Activated B cell treated with CpG ODN at 0.5 μM for 24 hours (primary cell): ENCODE measurements at regions of chr7 and their contacts with region 1.

Region 1: GRCh38 chr7:99374103-99375064 is at the start of gene ARPC1B:
- DNase-seq: peak; percentile 78
- ATAC-seq: peak; percentile 74
- H3K4me3 Mint-ChIP-seq: peak within 1 kb of the TSS; percentile 83
- H3K27ac Mint-ChIP-seq: peak within 1 kb of the TSS; percentile 79
- H3K4me1 Mint-ChIP-seq: peaks cover 33% of the 10 kb centered on the region
- H3K27me3 Mint-ChIP-seq: no peaks in the 10 kb centered on the region
- CTCF ChIP-seq: no peak
- total RNA-seq, gene ARPC1B: 300 and 312 TPM in 2 replicates

Region 2: GRCh38 chr7:99325545-99326407 is 48.6 kb before region 1 on chr7 and contains the start of gene ARPC1A:
- CTCF ChIA-PET with region 1: no interaction called
- POLR2A ChIA-PET with region 1: interaction called, 3 read pairs
- intact Hi-C with region 1: loop called (anchors 5 kb)
- DNase-seq: peak; percentile 93
- ATAC-seq: peak; percentile 93
- H3K4me3 Mint-ChIP-seq: peak within 1 kb of the TSS; percentile 93
- H3K27ac Mint-ChIP-seq: peak within 1 kb of the TSS; percentile 89
- H3K4me1 Mint-ChIP-seq: peaks cover 42% of the 10 kb centered on the region
- H3K27me3 Mint-ChIP-seq: no peaks in the 10 kb centered on the region
- CTCF ChIP-seq: no peak
- total RNA-seq, gene ARPC1A: 47.3 and 51.6 TPM in 2 replicates

Region 3: DNA sequence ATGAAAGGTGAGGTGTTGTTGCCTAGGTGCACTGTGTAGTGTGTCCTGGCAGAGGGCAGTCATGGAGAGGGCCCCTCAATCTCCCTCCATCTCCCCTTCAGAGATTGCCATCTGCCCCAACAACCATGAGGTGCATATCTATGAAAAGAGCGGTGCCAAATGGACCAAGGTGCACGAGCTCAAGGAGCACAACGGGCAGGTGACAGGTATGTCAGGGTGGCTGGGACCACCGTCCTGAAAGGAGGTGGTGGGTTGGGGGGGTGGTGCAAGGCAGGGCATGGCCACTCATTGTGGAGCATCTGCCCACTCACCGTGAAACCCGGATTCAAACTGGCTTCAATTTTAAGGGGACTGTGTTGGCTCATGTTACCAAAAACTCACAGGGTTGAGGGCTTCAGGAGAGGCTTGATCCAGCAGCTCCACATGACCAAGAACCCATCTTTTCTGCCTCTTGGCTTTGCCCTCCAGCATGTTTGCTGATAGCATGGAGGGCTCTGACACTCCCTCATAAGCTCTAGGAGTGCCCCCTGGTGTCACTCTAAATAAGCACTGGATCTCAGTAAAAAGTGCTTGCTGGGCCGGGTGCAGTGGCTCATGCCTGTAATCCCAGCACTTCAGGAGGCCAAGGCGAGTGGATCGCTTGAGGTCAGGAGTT is 12.3 kb after region 1 on chr7:
- CTCF ChIA-PET with region 1: interaction called, 6 read pairs
- POLR2A ChIA-PET with region 1: interaction called, 62 read pairs
- intact Hi-C with region 1: loop called (anchors 1 kb)
- DNase-seq: no peak
- ATAC-seq: peak; percentile 63
- H3K4me3 Mint-ChIP-seq: no peak overlapping the region
- H3K27ac Mint-ChIP-seq: peak overlapping the region; percentile 59
- H3K4me1 Mint-ChIP-seq: peaks cover 31% of the 10 kb centered on the region
- H3K27me3 Mint-ChIP-seq: no peaks in the 10 kb centered on the region
- CTCF ChIP-seq: no peak

Region 4: DNA sequence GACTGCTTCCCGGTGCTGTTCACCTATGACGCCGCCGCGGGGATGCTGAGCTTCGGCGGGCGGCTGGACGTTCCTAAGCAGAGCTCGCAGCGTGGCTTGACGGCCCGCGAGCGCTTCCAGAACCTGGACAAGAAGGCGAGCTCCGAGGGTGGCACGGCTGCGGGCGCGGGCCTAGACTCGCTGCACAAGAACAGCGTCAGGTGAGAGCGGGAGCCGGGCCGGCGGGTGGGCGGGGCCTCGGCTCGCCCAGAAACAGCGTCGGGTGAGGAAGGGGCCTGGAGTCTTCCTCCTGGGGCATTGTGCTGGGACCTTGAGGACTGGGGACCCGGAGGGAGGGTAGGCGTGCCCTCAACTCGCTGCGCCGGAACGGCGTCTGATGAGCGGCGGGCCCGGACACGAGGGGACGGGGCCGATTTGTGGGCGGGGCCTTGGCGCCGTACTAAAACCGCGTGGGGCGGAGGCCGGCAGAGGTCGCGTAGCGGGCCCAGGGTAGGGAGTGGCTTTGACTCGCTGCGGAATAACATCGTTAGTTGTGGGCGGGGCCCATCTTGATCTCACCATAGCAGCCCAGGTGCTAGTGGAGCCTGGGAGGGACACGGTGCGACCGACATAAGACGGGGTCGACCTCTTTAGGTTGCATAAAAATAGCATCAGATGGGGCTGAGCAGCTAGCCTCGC is 18.4 kb after region 1 on chr7:
- CTCF ChIA-PET with region 1: interaction called, 6 read pairs
- POLR2A ChIA-PET with region 1: interaction called, 62 read pairs
- intact Hi-C with region 1: loop called (anchors 1 kb)
- DNase-seq: peak; percentile 79
- ATAC-seq: peak; percentile 92
- H3K4me3 Mint-ChIP-seq: peak overlapping the region; percentile 84
- H3K27ac Mint-ChIP-seq: peak overlapping the region; percentile 78
- H3K4me1 Mint-ChIP-seq: peaks cover 28% of the 10 kb centered on the region
- H3K27me3 Mint-ChIP-seq: no peaks in the 10 kb centered on the region
- CTCF ChIP-seq: no peak

Region 5: GRCh38 chr7:99438573-99439480 is 64.4 kb after region 1 on chr7 and contains the starts of genes CPSF4 and PTCD1:
- CTCF ChIA-PET with region 1: no interaction called
- POLR2A ChIA-PET with region 1: interaction called, 8 read pairs
- intact Hi-C with region 1: loop called (anchors 2 kb)
- DNase-seq: peak; percentile 84
- ATAC-seq: peak; percentile 94
- H3K4me3 Mint-ChIP-seq: peak within 1 kb of the TSS; percentile 98
- H3K27ac Mint-ChIP-seq: peak within 1 kb of the TSS; percentile 94
- H3K4me1 Mint-ChIP-seq: peaks cover 32% of the 10 kb centered on the region
- H3K27me3 Mint-ChIP-seq: no peaks in the 10 kb centered on the region
- CTCF ChIP-seq: no peak
- total RNA-seq, gene CPSF4: 46.2 and 60.9 TPM in 2 replicates
- total RNA-seq, gene PTCD1: 8.4 and 13.4 TPM in 2 replicates

Region 6: DNA sequence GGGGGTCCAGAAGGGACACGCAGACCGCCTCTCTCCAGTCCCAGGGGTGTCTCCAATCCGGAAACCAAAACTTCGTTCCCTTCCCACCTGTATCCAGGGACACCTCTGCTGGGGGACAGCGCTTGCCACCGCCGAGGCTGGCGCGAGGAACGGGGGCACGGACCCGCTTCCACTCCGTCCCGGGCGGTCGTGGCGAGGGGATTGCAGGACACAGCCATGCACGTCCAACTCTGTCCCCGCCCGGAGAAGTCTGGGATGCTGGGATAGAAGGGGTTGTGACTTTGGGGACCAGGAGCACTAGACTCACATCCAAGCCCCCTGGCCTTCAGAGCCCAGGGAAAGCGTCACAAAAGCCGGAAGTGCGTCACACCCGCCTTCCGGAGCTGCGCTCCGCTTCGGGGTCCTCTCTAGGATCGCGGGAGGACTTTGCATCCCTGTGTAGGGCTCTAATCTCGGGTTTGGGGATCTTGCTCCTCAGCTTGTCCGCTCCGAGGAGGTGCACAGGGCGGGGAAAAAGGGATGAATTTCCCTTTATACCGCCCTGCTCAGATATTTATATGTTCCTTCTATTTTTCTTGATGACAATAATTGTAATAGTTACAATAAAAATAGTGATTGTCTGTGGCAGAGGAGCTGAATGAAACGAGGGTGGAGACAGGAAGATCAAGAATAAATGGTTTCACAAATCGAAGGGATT is 177.5 kb after region 1 on chr7 and contains the start of gene FAM200A:
- CTCF ChIA-PET with region 1: no interaction called
- POLR2A ChIA-PET with region 1: no interaction called
- intact Hi-C with region 1: loop called (anchors 10 kb)
- DNase-seq: peak; percentile 78
- ATAC-seq: peak; percentile 98
- H3K4me3 Mint-ChIP-seq: peak within 1 kb of the TSS; percentile 91
- H3K27ac Mint-ChIP-seq: peak within 1 kb of the TSS; percentile 87
- H3K4me1 Mint-ChIP-seq: peaks cover 33% of the 10 kb centered on the region
- H3K27me3 Mint-ChIP-seq: no peaks in the 10 kb centered on the region
- CTCF ChIP-seq: no peak
- total RNA-seq, gene FAM200A: 9.2 and 9.3 TPM in 2 replicates

Region 7: DNA sequence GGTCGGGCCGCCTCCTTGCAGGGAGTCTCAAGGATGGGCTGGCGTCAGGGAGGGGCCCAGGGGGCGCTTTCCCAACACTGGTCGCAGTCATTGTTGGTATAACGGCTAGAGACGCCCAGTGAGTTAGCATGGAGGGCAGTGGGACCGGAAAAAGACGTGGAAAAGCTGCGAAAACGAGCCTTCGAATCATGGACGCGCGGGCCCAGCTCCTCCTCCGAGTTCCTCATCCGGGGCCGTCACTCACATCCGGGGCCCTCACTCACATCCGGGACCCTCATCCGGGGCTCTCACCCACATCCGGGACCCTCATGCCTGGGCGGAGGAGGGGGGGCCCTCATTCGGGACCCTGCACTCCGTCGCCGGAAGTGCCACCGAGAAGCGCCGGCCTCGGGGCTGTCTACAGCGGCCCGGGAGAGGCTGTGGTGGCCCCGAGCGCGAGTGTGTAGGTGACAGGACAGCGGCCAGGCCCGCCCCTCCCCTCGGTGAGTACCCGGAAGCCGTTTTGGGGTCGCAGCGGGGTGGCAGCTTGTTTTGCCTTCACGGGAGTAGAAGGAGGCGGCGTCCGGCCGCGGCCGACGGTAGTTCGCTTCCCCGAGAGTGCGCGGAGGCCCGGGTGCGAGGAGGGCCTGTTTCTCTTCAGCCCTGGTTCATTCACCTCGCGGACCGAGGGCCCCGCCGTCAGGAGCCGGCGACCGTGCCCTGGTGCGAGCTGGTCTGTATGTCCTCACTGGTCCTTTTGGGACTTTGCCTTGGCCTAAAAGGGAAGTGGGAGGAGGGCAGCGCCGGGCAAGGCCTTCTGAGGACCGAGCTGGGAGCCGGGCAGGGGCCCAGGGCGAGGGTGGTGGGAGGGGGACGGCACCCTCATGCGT is 184.2 kb after region 1 on chr7 and contains the start of gene ZNF655:
- CTCF ChIA-PET with region 1: no interaction called
- POLR2A ChIA-PET with region 1: interaction called, 11 read pairs
- intact Hi-C with region 1: loop called (anchors 10 kb)
- DNase-seq: peak; percentile 85
- ATAC-seq: peak; percentile 79
- H3K4me3 Mint-ChIP-seq: peak within 1 kb of the TSS; percentile 97
- H3K27ac Mint-ChIP-seq: peak within 1 kb of the TSS; percentile 97
- H3K4me1 Mint-ChIP-seq: peaks cover 49% of the 10 kb centered on the region
- H3K27me3 Mint-ChIP-seq: no peaks in the 10 kb centered on the region
- CTCF ChIP-seq: no peak
- total RNA-seq, gene ZNF655: 98.5 and 116 TPM in 2 replicates